CD4-positive, alpha-beta memory T cell (primary cell): ENCODE measurements at regions of chr15 and their contacts with region 1.

Region 1: GRCh38 chr15:40217159-40217824 is 21.6 kb upstream of the PAK6 start:
- DNase-seq: peak; percentile 56 to 74 (median 69)
- H3K4me3 ChIP-seq: no peak overlapping the region
- H3K4me3 Mint-ChIP-seq: no peak overlapping the region
- H3K27ac ChIP-seq: no peak overlapping the region
- H3K27ac Mint-ChIP-seq: no peak overlapping the region
- H3K4me1 ChIP-seq: no peaks in the 10 kb centered on the region
- H3K4me1 Mint-ChIP-seq: no peaks in the 10 kb centered on the region
- H3K27me3 ChIP-seq: no peaks in the 10 kb centered on the region
- H3K27me3 Mint-ChIP-seq: no peaks in the 10 kb centered on the region

Region 2: DNA sequence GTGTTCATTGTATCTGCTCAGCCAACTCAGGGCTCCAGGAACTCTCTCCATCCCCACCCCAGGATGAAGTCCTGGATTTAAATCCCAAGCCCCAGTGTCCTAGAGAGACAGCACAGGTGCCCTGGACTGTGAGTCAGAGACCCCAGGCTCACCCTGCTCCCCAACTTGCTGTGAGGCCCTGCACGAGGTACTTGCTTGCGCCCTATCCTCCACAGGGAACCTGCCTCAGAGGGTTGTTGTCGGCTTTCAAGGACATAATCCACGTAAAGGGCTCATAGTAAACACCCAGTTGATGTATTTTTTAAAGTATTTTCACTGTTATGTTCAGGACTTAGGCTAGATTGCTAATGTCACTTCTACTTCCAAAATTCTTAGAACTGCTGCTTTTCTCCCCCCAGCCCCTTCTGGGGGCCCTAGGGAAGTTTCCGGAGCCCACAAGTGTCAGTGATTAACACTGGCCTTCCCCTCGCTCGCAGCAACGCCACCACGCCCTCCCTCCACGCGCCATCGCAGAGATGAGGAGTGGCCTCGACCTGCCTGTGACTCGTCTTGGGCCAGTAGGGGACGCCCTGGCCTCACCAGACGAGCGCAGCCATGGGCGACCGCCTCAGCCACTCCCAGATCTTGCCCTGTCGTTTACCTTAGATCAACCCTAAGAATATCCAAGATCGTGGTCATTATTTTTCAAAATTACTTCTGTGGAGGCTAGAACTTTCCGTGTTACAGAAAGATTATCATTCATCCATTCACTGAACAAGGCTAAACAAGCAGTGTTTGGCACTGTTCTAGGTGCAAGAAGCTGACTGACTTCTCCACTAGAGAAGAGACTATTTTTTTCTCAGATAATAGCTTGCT is 172.3 kb before region 1 on chr15:
- CTCF ChIA-PET with region 1: interaction called, 69 read pairs
- POLR2A ChIA-PET with region 1: interaction called, 5 read pairs
- intact Hi-C with region 1: loop called (anchors 1 kb)
- DNase-seq: peak; percentile 70 to 82 (median 75)
- H3K4me3 ChIP-seq: peak overlapping the region in 1 of 2 donors; percentile 1
- H3K4me3 Mint-ChIP-seq: peak overlapping the region; percentile 1 to 73 (median 46)
- H3K27ac ChIP-seq: peak overlapping the region; percentile 24
- H3K27ac Mint-ChIP-seq: peak overlapping the region in 6 of 7 donors; percentile 47 to 91 (median 73)
- H3K4me1 ChIP-seq: peaks cover 55% of the 10 kb centered on the region
- H3K4me1 Mint-ChIP-seq: peaks cover 36 to 61% (median 41%) of the 10 kb centered on the region in 4 donors
- H3K27me3 ChIP-seq: no peaks in the 10 kb centered on the region
- H3K27me3 Mint-ChIP-seq: no peaks in the 10 kb centered on the region

Region 3: DNA sequence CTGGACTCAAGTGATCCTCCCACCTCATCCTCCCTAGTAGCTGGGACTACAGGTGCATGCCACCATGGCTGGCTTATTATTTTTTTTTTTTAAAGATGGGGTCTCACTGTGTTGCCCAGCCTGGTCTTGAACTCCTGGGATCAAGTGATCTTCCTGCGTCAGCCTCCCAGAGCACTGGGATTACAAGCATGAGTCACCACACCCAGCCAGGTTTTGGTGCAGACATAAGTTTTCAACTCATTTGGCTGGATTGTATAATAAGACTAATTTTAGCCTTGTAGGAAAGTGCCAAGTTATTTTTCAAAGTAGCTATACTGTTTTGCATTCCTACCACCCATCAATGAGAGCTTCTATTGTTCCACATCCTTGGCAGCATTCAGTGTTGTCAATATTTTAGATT is 24.4 kb before region 1 on chr15:
- CTCF ChIA-PET with region 1: interaction called, 29 read pairs
- POLR2A ChIA-PET with region 1: no interaction called
- intact Hi-C with region 1: no loop called
- DNase-seq: no peak
- H3K4me3 ChIP-seq: no peak overlapping the region
- H3K4me3 Mint-ChIP-seq: no peak overlapping the region
- H3K27ac ChIP-seq: no peak overlapping the region
- H3K27ac Mint-ChIP-seq: no peak overlapping the region
- H3K4me1 ChIP-seq: peaks cover 14% of the 10 kb centered on the region
- H3K4me1 Mint-ChIP-seq: peaks cover 13 to 19% (median 18%) of the 10 kb centered on the region in 4 donors
- H3K27me3 ChIP-seq: no peaks in the 10 kb centered on the region
- H3K27me3 Mint-ChIP-seq: no peaks in the 10 kb centered on the region

Region 4: DNA sequence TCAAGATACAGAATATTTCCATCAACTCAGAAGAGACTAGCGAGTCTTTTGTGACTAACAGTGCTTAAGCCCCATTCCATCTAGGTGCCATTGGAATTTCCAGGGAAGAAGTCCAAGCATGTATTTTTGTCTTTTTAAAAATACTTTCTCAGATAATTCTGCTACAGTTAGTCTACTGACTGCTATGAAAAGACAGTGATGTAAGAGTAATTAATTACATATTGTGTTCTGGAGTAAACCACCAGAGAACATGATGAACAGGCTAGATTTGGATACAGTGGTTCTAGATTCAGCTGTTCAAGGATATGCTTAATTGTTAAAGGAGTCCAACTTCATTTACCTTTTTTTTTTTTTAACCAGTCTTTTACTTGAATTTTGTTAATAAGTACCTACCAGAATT is 13.2 kb before region 1 on chr15:
- CTCF ChIA-PET with region 1: interaction called, 29 read pairs
- POLR2A ChIA-PET with region 1: no interaction called
- intact Hi-C with region 1: no loop called
- DNase-seq: no peak
- H3K4me3 ChIP-seq: no peak overlapping the region
- H3K4me3 Mint-ChIP-seq: no peak overlapping the region
- H3K27ac ChIP-seq: no peak overlapping the region
- H3K27ac Mint-ChIP-seq: no peak overlapping the region
- H3K4me1 ChIP-seq: no peaks in the 10 kb centered on the region
- H3K4me1 Mint-ChIP-seq: peaks cover under 1 to 3% (median 1%) of the 10 kb centered on the region in 4 donors
- H3K27me3 ChIP-seq: no peaks in the 10 kb centered on the region
- H3K27me3 Mint-ChIP-seq: no peaks in the 10 kb centered on the region